CD8-positive, alpha-beta T cell (primary cell): ENCODE measurements at regions of chrX and their contacts with region 1.

Region 1: GRCh38 chrX:54639346-54640102 is 109.5 kb downstream of the GNL3L start:
- DNase-seq: peak; percentile 80 to 97 (median 92)
- ATAC-seq: peak; percentile 88
- H3K4me3 ChIP-seq: peak overlapping the region; percentile 60 to 94
- H3K4me3 Mint-ChIP-seq: peak overlapping the region; percentile 97
- H3K27ac ChIP-seq: peak overlapping the region; percentile 97 to 99
- H3K27ac Mint-ChIP-seq: peak overlapping the region; percentile 99
- H3K4me1 ChIP-seq: peaks cover 6% of the 10 kb centered on the region
- H3K4me1 Mint-ChIP-seq: peaks cover 9% of the 10 kb centered on the region
- H3K27me3 ChIP-seq: no peaks in the 10 kb centered on the region
- H3K27me3 Mint-ChIP-seq: no peaks in the 10 kb centered on the region
- CTCF ChIP-seq: peak; percentile 22

Region 2: DNA sequence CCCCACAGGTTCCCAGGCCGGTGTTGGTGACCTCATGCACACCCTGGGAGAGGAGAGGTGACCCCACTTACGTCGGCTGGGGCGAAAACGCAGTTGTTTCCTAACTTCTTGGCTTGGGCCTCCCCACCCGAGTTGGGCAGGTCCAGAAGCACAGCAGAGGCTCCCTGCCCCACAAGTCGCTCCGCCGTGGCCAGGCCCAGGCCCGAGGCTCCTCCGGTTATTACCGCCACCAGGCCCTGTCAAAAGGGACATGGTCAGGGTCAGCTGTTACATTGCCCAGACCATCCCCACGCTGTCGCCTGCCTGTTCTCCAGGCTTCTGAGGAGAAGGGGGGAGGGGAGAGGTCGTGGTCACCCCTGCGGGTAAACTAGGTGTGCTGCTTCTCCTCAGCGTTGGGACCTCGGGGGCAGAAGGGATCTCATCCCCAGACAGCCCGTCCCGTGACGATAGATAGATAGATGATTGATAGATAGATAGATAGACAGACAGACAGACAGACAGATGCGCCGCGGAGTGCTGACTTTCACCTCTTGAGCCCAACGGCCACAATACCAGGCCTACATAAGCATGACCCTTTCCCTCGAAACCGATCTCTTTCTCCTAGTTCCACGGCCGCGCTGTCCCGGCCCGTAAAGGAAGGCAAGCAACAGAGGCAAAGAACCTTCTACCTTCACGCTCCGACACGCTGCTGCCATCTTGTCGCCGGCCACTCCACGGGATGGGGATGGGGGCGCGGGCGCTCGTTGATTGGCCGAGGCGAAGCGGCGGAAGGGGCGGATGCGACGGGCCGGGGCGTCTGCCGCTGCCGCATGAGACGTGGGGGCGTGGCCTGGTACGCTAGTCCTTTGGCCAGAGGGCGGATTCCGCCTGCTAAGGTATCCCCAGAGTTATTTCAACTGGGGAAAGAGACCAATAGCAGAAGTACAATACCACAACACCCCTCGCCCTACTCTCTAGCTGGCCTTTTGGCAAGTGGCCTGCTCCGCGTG is 1205.6 kb before region 1 on chrX and contains the start of gene HSD17B10:
- CTCF ChIA-PET with region 1: no interaction called
- POLR2A ChIA-PET with region 1: no interaction called
- intact Hi-C with region 1: loop called in 1 of 2 experiments (anchors 10 kb)
- DNase-seq: peak; percentile 59 to 91 (median 84)
- ATAC-seq: peak; percentile 97
- H3K4me3 ChIP-seq: peak within 1 kb of the TSS; percentile 55 to 74
- H3K4me3 Mint-ChIP-seq: peak within 1 kb of the TSS; percentile 97
- H3K27ac ChIP-seq: peak within 1 kb of the TSS; percentile 71 to 81
- H3K27ac Mint-ChIP-seq: peak within 1 kb of the TSS; percentile 97
- H3K4me1 ChIP-seq: peaks cover 10% of the 10 kb centered on the region
- H3K4me1 Mint-ChIP-seq: peaks cover 16% of the 10 kb centered on the region
- H3K27me3 ChIP-seq: no peaks in the 10 kb centered on the region
- H3K27me3 Mint-ChIP-seq: no peaks in the 10 kb centered on the region
- CTCF ChIP-seq: no peak
- total RNA-seq, gene HSD17B10: 23.4 to 26.2 TPM

Region 3: GRCh38 chrX:54182864-54183608 is 456.5 kb before region 1 on chrX and contains the start of gene FAM120C:
- CTCF ChIA-PET with region 1: no interaction called
- POLR2A ChIA-PET with region 1: interaction called, 5 read pairs
- intact Hi-C with region 1: loop called (anchors 1 to 5 kb)
- DNase-seq: peak; percentile 26 to 83 (median 59)
- ATAC-seq: peak; percentile 70
- H3K4me3 ChIP-seq: peak within 1 kb of the TSS; percentile 60 to 72
- H3K4me3 Mint-ChIP-seq: peak within 1 kb of the TSS; percentile 78
- H3K27ac ChIP-seq: peak within 1 kb of the TSS; percentile 75 to 83
- H3K27ac Mint-ChIP-seq: peak within 1 kb of the TSS; percentile 88
- H3K4me1 ChIP-seq: peaks cover 38% of the 10 kb centered on the region
- H3K4me1 Mint-ChIP-seq: peaks cover 43% of the 10 kb centered on the region
- H3K27me3 ChIP-seq: no peaks in the 10 kb centered on the region
- H3K27me3 Mint-ChIP-seq: no peaks in the 10 kb centered on the region
- CTCF ChIP-seq: no peak
- total RNA-seq, gene FAM120C: 10.9 to 11.1 TPM

Region 4: GRCh38 chrX:54413753-54414152 is 225.8 kb before region 1 on chrX:
- CTCF ChIA-PET with region 1: no interaction called
- POLR2A ChIA-PET with region 1: no interaction called
- intact Hi-C with region 1: no loop called
- DNase-seq: peak in 2 of 9 experiments; percentile 6 to 9
- ATAC-seq: no peak
- H3K4me3 ChIP-seq: no peak overlapping the region
- H3K4me3 Mint-ChIP-seq: no peak overlapping the region
- H3K27ac ChIP-seq: no peak overlapping the region
- H3K27ac Mint-ChIP-seq: no peak overlapping the region
- H3K4me1 ChIP-seq: peaks cover 4% of the 10 kb centered on the region
- H3K4me1 Mint-ChIP-seq: peaks cover 17% of the 10 kb centered on the region
- H3K27me3 ChIP-seq: peaks cover 0 to 5% of the 10 kb centered on the region in 2 experiments
- H3K27me3 Mint-ChIP-seq: peaks cover 15% of the 10 kb centered on the region
- CTCF ChIP-seq: no peak

Region 5: GRCh38 chrX:54529552-54530357 is 109.8 kb before region 1 on chrX and contains the start of gene GNL3L:
- CTCF ChIA-PET with region 1: no interaction called
- POLR2A ChIA-PET with region 1: interaction called, 13 read pairs
- intact Hi-C with region 1: loop called (anchors 1 kb)
- DNase-seq: peak; percentile 55 to 89 (median 78)
- ATAC-seq: peak; percentile 83
- H3K4me3 ChIP-seq: peak within 1 kb of the TSS; percentile 85 to 95
- H3K4me3 Mint-ChIP-seq: peak within 1 kb of the TSS; percentile 97
- H3K27ac ChIP-seq: peak within 1 kb of the TSS; percentile 79 to 94
- H3K27ac Mint-ChIP-seq: peak within 1 kb of the TSS; percentile 97
- H3K4me1 ChIP-seq: peaks cover 22% of the 10 kb centered on the region
- H3K4me1 Mint-ChIP-seq: peaks cover 40% of the 10 kb centered on the region
- H3K27me3 ChIP-seq: no peaks in the 10 kb centered on the region
- H3K27me3 Mint-ChIP-seq: no peaks in the 10 kb centered on the region
- CTCF ChIP-seq: no peak
- total RNA-seq, gene GNL3L: 20.9 to 24.0 TPM

Region 6: DNA sequence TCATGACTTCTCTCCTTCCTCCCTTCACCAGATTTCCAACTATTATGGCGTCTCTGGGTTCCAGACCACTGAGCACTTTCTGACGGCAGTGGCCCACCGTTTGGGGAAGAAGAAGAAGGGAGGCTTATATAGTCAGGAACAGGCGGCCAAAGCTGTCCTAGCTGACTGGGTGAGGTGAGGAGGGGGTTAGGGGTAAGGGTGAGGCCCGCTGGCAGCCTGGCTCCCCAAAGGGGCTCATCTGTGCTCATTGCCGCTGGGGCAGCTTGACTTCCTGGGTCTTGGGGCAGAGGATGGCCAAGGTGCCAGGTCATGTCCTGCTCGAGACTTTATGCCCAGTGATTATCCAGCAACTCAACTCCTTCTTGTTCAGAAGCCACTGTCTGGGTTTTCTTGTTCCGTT is 87.7 kb before region 1 on chrX:
- CTCF ChIA-PET with region 1: no interaction called
- POLR2A ChIA-PET with region 1: no interaction called
- intact Hi-C with region 1: no loop called
- DNase-seq: no peak
- ATAC-seq: no peak
- H3K4me3 ChIP-seq: no peak overlapping the region
- H3K4me3 Mint-ChIP-seq: no peak overlapping the region
- H3K27ac ChIP-seq: no peak overlapping the region
- H3K27ac Mint-ChIP-seq: no peak overlapping the region
- H3K4me1 ChIP-seq: no peaks in the 10 kb centered on the region
- H3K4me1 Mint-ChIP-seq: no peaks in the 10 kb centered on the region
- H3K27me3 ChIP-seq: no peaks in the 10 kb centered on the region
- H3K27me3 Mint-ChIP-seq: no peaks in the 10 kb centered on the region
- CTCF ChIP-seq: no peak

Region 7: GRCh38 chrX:54786962-54787361 is 147.4 kb after region 1 on chrX:
- CTCF ChIA-PET with region 1: interaction called, 3 read pairs
- POLR2A ChIA-PET with region 1: no interaction called
- intact Hi-C with region 1: loop called in 1 of 2 experiments (anchors 5 kb)
- DNase-seq: peak in 6 of 9 experiments; percentile 19 to 57 (median 35)
- ATAC-seq: peak; percentile 68
- H3K4me3 ChIP-seq: no peak overlapping the region
- H3K4me3 Mint-ChIP-seq: no peak overlapping the region
- H3K27ac ChIP-seq: no peak overlapping the region
- H3K27ac Mint-ChIP-seq: no peak overlapping the region
- H3K4me1 ChIP-seq: no peaks in the 10 kb centered on the region
- H3K4me1 Mint-ChIP-seq: no peaks in the 10 kb centered on the region
- H3K27me3 ChIP-seq: no peaks in the 10 kb centered on the region
- H3K27me3 Mint-ChIP-seq: no peaks in the 10 kb centered on the region
- CTCF ChIP-seq: peak; percentile 16